HEK293 (cell line): ENCODE measurements at regions of chr14 and their contacts with region 1.

Region 1: GRCh38 chr14:21852061-21852664 is 178.5 kb upstream of the OR4E1 start:
- H3K4me3 ChIP-seq: no peak overlapping the region
- H3K27ac ChIP-seq: no peak overlapping the region
- H3K4me1 ChIP-seq: no peaks in the 10 kb centered on the region
- CTCF ChIP-seq: no peak

Region 2: DNA sequence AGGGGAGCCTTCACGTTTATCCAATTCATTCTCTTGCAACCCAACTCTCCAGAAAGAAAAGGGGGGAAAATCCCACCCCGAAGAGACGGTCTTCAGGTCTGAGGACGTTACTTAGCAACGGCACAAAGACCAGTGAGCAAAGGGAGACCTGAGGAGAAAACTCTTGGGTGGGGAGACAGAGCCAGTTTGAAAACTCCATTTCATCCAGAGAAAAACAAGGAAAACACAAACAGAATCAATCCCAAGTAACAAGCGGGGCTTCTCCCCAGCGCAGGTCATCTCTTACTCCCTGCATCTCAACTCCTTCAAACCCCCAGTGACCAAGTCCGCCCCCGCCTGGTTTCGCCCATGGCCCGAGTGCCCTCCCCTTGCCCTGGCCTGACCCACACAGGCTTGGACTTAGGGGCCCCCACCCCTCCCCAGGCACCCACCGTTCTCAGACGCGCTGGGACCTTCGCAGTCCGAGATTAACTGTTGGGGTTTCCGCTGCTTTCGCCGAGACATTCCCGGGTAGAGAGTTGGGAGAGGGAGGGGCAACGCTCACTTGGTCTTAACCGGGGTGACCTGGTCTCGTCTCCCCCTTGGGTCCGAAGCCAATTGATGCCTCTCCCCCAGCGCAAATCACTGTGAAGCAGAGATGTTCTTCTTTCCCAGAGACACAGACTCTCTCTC is 315.6 kb before region 1 on chr14:
- CTCF ChIA-PET with region 1: no interaction called
- POLR2A ChIA-PET with region 1: no interaction called
- H3K4me3 ChIP-seq: no peak overlapping the region
- H3K27ac ChIP-seq: no peak overlapping the region
- H3K4me1 ChIP-seq: no peaks in the 10 kb centered on the region
- CTCF ChIP-seq: no peak

Region 3: GRCh38 chr14:21686468-21686867 is 165.7 kb before region 1 on chr14:
- CTCF ChIA-PET with region 1: no interaction called
- POLR2A ChIA-PET with region 1: no interaction called
- H3K4me3 ChIP-seq: no peak overlapping the region
- H3K27ac ChIP-seq: no peak overlapping the region
- H3K4me1 ChIP-seq: no peaks in the 10 kb centered on the region
- CTCF ChIP-seq: no peak

Region 4: GRCh38 chr14:21748869-21749303 is 103.3 kb before region 1 on chr14:
- CTCF ChIA-PET with region 1: interaction called, 11 read pairs
- POLR2A ChIA-PET with region 1: no interaction called
- H3K4me3 ChIP-seq: no peak overlapping the region
- H3K27ac ChIP-seq: no peak overlapping the region
- H3K4me1 ChIP-seq: no peaks in the 10 kb centered on the region
- CTCF ChIP-seq: peak; percentile 49

Region 5: GRCh38 chr14:21825149-21825743 is 26.9 kb before region 1 on chr14:
- CTCF ChIA-PET with region 1: interaction called, 19 read pairs
- POLR2A ChIA-PET with region 1: interaction called, 3 read pairs
- H3K4me3 ChIP-seq: no peak overlapping the region
- H3K27ac ChIP-seq: no peak overlapping the region
- H3K4me1 ChIP-seq: peaks cover 3% of the 10 kb centered on the region; the same call in 1 of the 2 replicates
- CTCF ChIP-seq: peak; percentile 46; the same call in 1 of the 2 replicates

Region 6: DNA sequence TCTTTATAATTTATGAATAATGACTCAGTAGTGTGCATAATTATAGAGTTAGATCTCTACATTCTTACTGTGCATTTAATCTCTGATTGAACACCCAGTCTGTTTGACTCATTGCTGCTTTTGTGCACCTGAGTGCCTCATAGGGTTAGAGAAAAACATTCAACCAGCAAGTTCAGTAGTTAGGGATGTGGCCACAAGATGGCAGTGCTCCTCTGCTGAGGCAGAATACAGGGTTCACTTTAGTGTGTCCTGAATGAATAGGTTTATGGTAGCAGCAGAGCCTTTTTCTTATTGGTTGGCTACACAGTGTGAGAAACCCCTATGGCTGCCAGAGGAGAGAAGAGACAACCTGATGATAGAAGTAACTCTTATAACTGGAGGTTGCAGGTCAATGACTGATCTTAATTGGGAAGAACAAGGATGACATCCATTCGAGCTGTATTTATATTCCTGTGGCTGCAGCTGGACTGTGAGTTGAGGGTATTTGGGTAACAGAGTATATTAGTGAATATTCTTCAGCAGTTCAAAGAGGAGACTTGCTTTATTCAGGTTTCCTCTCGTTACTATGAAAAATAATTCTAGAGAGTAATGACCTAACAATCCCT is 16.4 kb after region 1 on chr14:
- CTCF ChIA-PET with region 1: interaction called, 10 read pairs
- POLR2A ChIA-PET with region 1: no interaction called
- H3K4me3 ChIP-seq: no peak overlapping the region
- H3K27ac ChIP-seq: no peak overlapping the region
- H3K4me1 ChIP-seq: no peaks in the 10 kb centered on the region
- CTCF ChIP-seq: peak; percentile 37; the same call in 1 of the 2 replicates